ENCODE measurements at regions of chr3 and their contacts with region 1.

Region 1: GRCh38 chr3:172148702-172149565 is 109.6 kb downstream of the FNDC3B start:
- DNase-seq: no peak
- H3K4me3 ChIP-seq: no peak overlapping the region
- H3K27ac ChIP-seq: no peak overlapping the region
- H3K4me1 ChIP-seq: peaks cover 42% of the 10 kb centered on the region
- CTCF ChIP-seq: no peak

Region 2: GRCh38 chr3:172164620-172165362 is 15.9 kb after region 1 on chr3:
- CTCF ChIA-PET with region 1: no interaction called
- POLR2A ChIA-PET with region 1: interaction called, 11 read pairs
- intact Hi-C with region 1: no loop called
- DNase-seq: no peak
- H3K4me3 ChIP-seq: no peak overlapping the region
- H3K27ac ChIP-seq: no peak overlapping the region
- H3K4me1 ChIP-seq: peaks cover 3% of the 10 kb centered on the region
- CTCF ChIP-seq: no peak